ENCODE measurements at regions of chr11 and their contacts with region 1.

Region 1: DNA sequence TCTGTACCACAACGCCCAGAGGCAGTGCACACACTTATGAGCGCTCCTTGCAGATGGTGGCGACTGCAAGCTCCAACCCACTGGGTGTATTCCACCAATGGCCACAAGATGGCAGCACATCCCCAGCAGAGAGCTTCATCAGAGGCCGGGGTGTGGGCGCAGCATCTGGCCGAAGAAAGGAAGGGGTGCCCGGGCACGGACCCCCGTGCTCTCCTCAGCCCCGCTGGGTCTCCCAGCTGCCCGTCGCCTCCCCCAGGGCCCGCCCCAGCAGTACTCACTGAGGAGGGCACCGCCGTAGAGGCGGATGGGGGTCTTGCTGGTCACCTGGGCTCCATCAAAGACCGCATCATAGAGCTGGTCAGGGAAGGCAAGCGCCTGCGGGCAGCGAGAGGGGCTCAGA is 14.2 kb downstream of the TP53I11 start:
- DNase-seq: peak; percentile 94

Region 2: GRCh38 chr11:44793350-44794090 is 143.0 kb before region 1 on chr11:
- intact Hi-C with region 1: no loop called
- DNase-seq: no peak

Region 3: GRCh38 chr11:45298718-45299117 is 362.2 kb after region 1 on chr11:
- intact Hi-C with region 1: loop called in 1 of 2 experiments (anchors 10 kb)
- DNase-seq: no peak

Region 4: DNA sequence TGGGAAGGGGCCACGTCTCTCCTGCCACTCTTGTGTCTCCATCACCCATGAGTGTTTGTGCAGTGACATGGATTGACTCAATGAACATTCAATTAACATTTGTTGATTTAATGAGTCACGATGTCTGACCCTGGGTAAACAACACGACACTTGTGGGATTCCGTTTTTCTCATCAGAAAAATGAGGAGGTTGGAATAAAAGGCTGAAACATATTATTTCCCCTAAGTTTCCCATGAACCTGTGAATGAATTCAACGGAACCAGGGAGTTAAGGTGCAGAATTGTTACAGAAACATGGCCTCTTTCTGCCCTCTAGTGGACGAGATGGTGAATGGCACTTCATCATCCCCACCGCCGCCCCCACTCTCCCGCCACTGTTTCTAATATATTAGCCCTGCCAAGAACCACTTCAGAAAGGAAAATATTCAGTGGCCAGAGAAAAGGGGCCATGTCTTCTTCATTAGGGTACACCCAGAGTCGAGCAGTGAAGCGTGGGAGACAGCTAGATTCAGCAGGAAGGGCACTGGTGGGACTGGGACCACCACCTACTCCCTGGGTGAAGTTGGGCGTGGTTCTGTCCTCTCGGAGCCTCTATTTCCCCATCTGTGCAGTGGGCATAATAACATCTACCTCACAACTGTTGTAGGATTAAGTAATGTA is 395.9 kb after region 1 on chr11:
- intact Hi-C with region 1: loop called in 1 of 2 experiments (anchors 5 kb)
- DNase-seq: no peak